GM10248 (cell line): ENCODE measurements at regions of chr4 and their contacts with region 1.

Region 1: GRCh38 chr4:139229534-139230039 is 50.4 kb downstream of the MGARP start:
- DNase-seq: peak; percentile 52
- CTCF ChIP-seq: peak; percentile 65

Region 2: DNA sequence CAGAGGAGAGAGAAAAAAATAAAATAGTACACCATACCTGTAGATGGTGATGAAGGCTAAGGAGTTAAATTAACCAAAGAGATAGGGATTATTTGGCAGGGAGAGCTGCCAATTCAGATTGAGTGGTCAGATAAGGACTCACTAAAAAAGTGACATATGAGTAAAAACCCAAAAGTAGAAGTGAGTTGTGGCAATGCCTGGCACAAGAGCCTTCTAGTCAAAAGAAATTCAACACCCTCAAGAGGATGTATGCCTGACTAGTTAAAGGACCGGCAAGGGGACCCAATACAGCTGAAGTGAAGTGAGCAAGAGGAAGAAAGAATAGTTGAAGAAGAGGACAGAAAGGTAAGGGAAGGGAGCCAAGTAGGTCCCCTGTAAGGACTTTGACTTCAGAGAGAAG is 87.5 kb before region 1 on chr4:
- CTCF ChIA-PET with region 1: no interaction called
- POLR2A ChIA-PET with region 1: no interaction called
- DNase-seq: no peak
- CTCF ChIP-seq: no peak

Region 3: GRCh38 chr4:139208404-139208945 is 21.1 kb before region 1 on chr4:
- CTCF ChIA-PET with region 1: interaction called, 10 read pairs
- POLR2A ChIA-PET with region 1: no interaction called
- DNase-seq: no peak
- CTCF ChIP-seq: no peak

Region 4: GRCh38 chr4:139214039-139214534 is 15.5 kb before region 1 on chr4:
- CTCF ChIA-PET with region 1: interaction called, 19 read pairs
- POLR2A ChIA-PET with region 1: no interaction called
- DNase-seq: peak; percentile 78
- CTCF ChIP-seq: no peak

Region 5: DNA sequence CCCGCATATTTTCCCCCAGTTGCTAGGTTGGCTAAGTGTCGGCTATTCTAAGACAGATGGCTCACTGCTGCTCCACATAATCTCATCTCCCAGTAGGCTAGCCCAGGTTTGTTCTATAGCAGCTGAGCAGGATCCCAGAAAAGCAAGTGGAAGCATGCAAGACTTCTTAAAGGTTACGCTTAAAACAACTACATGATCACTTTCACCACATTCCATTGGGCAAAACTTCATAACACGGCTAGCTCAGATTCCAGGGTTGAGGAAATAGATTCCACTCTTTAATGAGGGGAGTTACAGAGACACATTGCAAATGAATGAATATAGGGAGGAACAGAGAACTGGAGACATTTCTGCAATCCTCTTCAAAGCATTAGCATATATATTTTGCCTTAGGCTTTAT is 211.4 kb after region 1 on chr4:
- CTCF ChIA-PET with region 1: no interaction called
- POLR2A ChIA-PET with region 1: no interaction called
- DNase-seq: no peak
- CTCF ChIP-seq: no peak